PC-3 (cell line): ENCODE measurements at regions of chr11 and their contacts with region 1.

Region 1: DNA sequence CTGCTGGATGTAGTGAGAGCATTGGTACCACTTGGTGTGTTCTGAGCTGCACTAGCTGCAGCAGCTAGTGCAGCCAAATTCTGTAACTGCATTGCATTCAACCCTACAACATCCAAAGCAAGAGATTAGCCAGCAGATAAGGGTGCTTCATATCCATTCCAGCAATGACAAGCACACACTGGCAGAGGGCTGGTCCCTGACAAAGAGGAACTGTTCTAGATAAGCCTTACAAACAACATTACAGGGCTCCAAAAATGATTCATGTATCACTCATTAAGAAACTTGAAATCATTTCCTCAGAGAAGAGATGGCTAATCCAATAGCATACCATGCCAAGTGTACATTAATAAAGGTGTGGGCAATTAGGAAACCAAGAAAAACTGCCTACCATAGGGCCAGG is 28.4 kb upstream of the RAPSN start:
- DNase-seq: peak; percentile 72
- ATAC-seq: peak; percentile 94
- H3K4me3 ChIP-seq: no peak overlapping the region
- H3K27ac ChIP-seq: peak overlapping the region; percentile 75
- H3K4me1 ChIP-seq: peaks cover 23% of the 10 kb centered on the region
- H3K27me3 ChIP-seq: no peaks in the 10 kb centered on the region
- CTCF ChIP-seq: no peak

Region 2: DNA sequence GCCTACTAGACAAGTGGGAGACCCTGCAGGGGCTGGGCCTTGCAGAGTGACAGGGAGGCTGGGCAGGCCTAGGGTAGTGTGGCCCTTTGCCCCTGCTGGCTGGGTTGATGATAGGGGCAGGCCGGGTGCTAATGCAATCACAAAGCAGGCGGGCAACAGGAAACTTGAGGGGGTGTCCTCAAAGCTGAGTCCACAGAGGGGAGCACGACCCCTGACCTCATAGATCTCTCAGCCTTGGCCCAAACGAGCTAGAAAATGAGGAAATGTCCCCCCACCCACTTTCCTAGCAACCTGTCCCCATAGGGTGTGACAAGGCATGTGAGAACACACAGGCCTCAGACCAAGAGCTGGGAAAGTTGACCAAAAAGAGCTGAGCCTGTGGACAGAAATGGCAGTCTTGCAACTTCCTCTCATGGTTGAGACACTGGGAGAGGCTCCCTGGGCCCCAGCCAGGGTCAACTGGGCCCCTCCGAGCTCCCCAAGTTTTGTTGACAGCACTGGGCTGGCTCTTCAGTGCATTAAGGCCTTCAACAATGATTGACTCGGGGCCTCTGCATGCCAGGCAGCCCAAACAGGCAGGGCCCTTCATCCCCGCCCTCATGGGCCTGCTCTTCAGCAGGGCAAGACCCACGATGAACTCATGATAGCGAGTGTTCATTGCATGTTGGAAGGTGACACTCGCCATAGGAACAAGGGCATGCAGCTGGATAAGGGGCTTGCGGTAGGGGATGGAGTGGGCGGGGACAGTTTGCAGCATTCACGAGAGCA is 89.2 kb before region 1 on chr11:
- CTCF ChIA-PET with region 1: no interaction called
- POLR2A ChIA-PET with region 1: no interaction called
- intact Hi-C with region 1: no loop called
- DNase-seq: no peak
- ATAC-seq: no peak
- H3K4me3 ChIP-seq: no peak overlapping the region
- H3K27ac ChIP-seq: no peak overlapping the region
- H3K4me1 ChIP-seq: no peaks in the 10 kb centered on the region
- H3K27me3 ChIP-seq: no peaks in the 10 kb centered on the region
- CTCF ChIP-seq: no peak

Region 3: GRCh38 chr11:47523468-47524225 is 46.3 kb after region 1 on chr11:
- CTCF ChIA-PET with region 1: no interaction called
- POLR2A ChIA-PET with region 1: no interaction called
- intact Hi-C with region 1: loop called (anchors 5 kb)
- DNase-seq: peak; percentile 74
- ATAC-seq: peak; percentile 92
- H3K4me3 ChIP-seq: peak overlapping the region; percentile 36; the same call in 1 of the 2 replicates
- H3K27ac ChIP-seq: peak overlapping the region; percentile 65
- H3K4me1 ChIP-seq: peaks cover 24% of the 10 kb centered on the region
- H3K27me3 ChIP-seq: no peaks in the 10 kb centered on the region
- CTCF ChIP-seq: no peak

Region 4: DNA sequence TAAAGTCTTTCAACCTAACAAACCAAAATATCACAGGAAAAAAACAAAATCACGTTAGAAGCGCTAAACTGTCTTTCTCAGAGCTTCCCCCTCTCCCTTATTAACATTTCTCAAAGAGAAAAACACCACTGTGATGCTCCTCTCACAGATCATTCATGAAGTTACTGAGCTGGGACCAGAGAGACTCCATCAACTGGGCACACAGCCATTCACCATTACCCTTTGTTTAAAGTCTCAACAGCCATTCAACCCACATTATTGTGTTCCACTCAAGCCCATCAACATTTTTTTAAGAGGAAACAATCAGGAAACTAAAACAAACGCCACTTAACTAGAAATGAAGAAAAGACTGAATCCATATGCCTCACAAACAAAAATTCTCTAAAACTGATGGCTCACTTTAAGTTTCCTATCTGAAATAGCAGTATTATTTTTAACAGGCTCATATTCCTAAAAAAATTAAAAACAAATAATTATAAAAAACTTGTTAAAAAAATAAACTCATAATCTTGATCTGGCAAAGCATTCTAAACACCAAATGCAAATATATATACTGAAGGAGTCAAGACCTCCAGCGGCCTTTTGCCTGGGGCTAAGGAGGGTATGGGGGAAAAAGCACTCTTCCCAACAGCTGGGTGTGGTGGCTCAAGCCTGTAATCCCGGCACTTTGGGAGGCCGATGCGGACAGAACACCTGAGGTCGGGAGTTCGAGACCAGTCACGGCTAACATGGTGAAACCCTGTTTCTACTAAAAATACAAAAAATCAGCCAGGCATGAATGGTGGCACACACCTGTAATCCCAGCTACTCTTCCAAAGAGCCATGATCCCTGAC is 61.6 kb after region 1 on chr11:
- CTCF ChIA-PET with region 1: no interaction called
- POLR2A ChIA-PET with region 1: no interaction called
- intact Hi-C with region 1: loop called (anchors 1 kb)
- DNase-seq: no peak
- ATAC-seq: no peak
- H3K4me3 ChIP-seq: peak overlapping the region; percentile 46; the same call in 1 of the 2 replicates
- H3K27ac ChIP-seq: peak overlapping the region; percentile 91
- H3K4me1 ChIP-seq: peaks cover 38% of the 10 kb centered on the region
- H3K27me3 ChIP-seq: no peaks in the 10 kb centered on the region
- CTCF ChIP-seq: no peak

Region 5: GRCh38 chr11:47620836-47621378 is 143.6 kb after region 1 on chr11:
- CTCF ChIA-PET with region 1: interaction called, 14 read pairs
- POLR2A ChIA-PET with region 1: no interaction called
- intact Hi-C with region 1: no loop called
- DNase-seq: no peak
- ATAC-seq: no peak
- H3K4me3 ChIP-seq: no peak overlapping the region
- H3K27ac ChIP-seq: no peak overlapping the region
- H3K4me1 ChIP-seq: peaks cover 3% of the 10 kb centered on the region; the same call in 1 of the 2 replicates
- H3K27me3 ChIP-seq: no peaks in the 10 kb centered on the region
- CTCF ChIP-seq: no peak